PC-9 (cell line): ENCODE measurements at regions of chr4 and their contacts with region 1.

Region 1: GRCh38 chr4:128068935-128069334 is 7.8 kb downstream of the LARP1B start:
- DNase-seq: no peak
- H3K4me3 ChIP-seq: no peak overlapping the region
- H3K27ac ChIP-seq: no peak overlapping the region
- H3K4me1 ChIP-seq: no peaks in the 10 kb centered on the region
- H3K27me3 ChIP-seq: no peaks in the 10 kb centered on the region
- CTCF ChIP-seq: no peak

Region 2: GRCh38 chr4:128220286-128221235 is 151.6 kb after region 1 on chr4:
- CTCF ChIA-PET with region 1: interaction called, 14 read pairs
- POLR2A ChIA-PET with region 1: no interaction called
- intact Hi-C with region 1: no loop called
- DNase-seq: peak in 1 of 2 experiments; percentile 37
- H3K4me3 ChIP-seq: no peak overlapping the region
- H3K27ac ChIP-seq: no peak overlapping the region
- H3K4me1 ChIP-seq: no peaks in the 10 kb centered on the region
- H3K27me3 ChIP-seq: no peaks in the 10 kb centered on the region
- CTCF ChIP-seq: peak; percentile 51; the same call in 1 of the 2 replicates

Region 3: GRCh38 chr4:128630871-128631270 is 561.9 kb after region 1 on chr4:
- CTCF ChIA-PET with region 1: no interaction called
- POLR2A ChIA-PET with region 1: no interaction called
- intact Hi-C with region 1: no loop called
- DNase-seq: no peak
- H3K4me3 ChIP-seq: no peak overlapping the region
- H3K27ac ChIP-seq: no peak overlapping the region
- H3K4me1 ChIP-seq: peaks cover 6% of the 10 kb centered on the region; the same call in 1 of the 2 replicates
- H3K27me3 ChIP-seq: no peaks in the 10 kb centered on the region
- CTCF ChIP-seq: no peak